Lower lobe of right lung (tissue), 2 donors: ENCODE measurements at regions of chr19 and their contacts with region 1.

Region 1: DNA sequence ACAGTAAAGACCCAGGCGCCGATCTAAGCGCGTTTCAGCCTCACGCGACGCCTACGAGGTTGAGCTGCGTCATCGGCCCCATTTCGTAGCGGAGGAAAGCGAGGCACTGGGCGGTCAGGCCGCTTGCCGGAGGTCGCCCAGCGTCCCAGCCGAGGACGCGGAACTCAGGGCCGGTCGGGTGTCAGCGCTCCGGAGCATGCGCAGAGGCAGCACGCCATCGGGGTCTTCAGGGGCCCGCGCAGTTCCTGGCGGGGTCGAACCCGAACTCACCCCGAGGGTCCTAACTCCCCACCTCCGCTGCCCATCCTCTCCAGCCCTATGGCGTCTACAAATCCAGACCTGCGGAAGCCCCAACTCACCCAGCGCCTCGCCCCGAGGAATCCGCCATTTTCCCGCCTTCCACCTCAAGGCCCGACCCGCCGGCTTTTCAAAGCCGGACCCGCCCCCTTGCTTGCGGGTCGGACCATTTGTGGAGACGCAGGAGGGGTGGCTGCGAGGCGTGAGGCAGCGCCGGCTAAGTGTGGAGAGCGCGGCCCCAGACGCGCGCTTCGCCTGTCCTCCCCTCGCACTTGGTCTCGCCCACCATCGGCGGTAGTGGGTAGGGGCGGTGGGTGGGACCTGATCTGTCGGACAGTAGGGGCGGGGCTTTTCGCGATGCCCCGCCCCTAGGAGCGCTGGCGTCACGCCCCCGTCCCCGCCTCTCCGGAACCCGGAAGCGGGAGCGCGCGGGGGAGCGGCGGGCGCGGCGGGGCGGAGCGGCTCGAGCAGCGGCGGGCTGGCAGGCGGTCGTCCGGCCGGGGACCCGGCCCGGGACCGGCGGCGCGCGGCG is at the starts of genes HAUS8 and MYO9B:
- DNase-seq: peak; percentile 99
- ATAC-seq: peak; percentile 97 to 99
- H3K4me3 ChIP-seq: peak within 1 kb of the TSS; percentile 76
- H3K27ac ChIP-seq: peak within 1 kb of the TSS; percentile 77
- H3K4me1 ChIP-seq: peaks cover 47% of the 10 kb centered on the region
- H3K27me3 ChIP-seq: no peaks in the 10 kb centered on the region
- CTCF ChIP-seq: no peak
- total RNA-seq, gene HAUS8: 9.1 TPM
- total RNA-seq, gene MYO9B: 205 TPM

Region 2: GRCh38 chr19:17282488-17283255 is 207.4 kb after region 1 on chr19:
- intact Hi-C with region 1: loop called (anchors 10 kb)
- DNase-seq: peak; percentile 90
- ATAC-seq: peak; percentile 96 to 97
- H3K4me3 ChIP-seq: peak overlapping the region; percentile 49
- H3K27ac ChIP-seq: no peak overlapping the region
- H3K4me1 ChIP-seq: peaks cover 20% of the 10 kb centered on the region
- H3K27me3 ChIP-seq: peaks cover 20% of the 10 kb centered on the region
- CTCF ChIP-seq: peak; percentile 96